Activated CD8-positive, alpha-beta memory T cell treated with anti-CD3 and anti-CD28 coated beads, Interleukin-2, amount 10 ng/mL, durations not matched to agents 7 days and 5 days (primary cell): ENCODE measurements at regions of chr1 and their contacts with region 1.

Region 1: DNA sequence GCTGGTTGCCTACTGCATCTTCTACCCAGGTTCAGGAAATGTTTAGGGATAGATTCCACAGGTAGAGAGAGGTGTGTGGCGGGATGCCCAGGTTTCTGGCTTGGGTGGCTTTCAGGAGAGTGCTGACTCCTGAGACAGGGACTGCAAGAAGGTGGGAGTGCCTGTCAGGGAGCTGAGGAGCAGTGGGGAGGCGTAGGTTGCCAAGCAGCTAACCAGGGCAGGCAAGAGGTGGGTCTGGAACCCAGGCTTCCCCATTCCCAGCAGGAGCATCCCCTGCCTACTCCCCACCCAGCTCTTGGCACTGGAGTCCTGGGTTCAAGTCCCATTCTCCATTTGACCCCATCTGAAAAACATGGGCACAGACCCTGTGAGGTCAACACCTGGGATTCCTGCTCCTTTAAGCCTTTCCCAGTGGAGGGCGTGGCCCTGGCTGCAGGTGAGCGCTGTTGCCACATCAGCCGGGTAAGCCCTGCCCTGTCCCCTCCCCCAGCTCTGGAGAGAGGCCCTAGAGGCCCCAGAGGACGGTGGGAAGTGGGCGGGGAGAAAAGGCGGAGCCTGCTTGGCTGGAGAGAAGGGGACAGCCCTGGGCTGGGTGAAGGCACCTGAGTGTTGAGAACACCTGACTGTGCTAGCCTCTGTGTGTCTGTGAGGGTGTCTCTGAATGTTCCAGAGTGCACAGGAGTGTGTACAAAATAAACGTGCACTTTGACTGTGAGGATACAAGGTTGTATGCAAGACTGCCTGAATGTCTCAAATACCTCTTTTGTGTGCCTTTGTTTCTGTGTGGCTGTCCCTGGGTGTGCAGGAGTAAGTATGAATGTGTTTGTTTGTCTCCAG is 14.0 kb upstream of the SYNC start:
- DNase-seq: peak; percentile 72
- ATAC-seq: peak; percentile 63
- H3K4me3 Mint-ChIP-seq: no peak overlapping the region
- H3K27ac Mint-ChIP-seq: no peak overlapping the region
- H3K4me1 Mint-ChIP-seq: peaks cover 8% of the 10 kb centered on the region
- H3K27me3 Mint-ChIP-seq: peaks cover 5% of the 10 kb centered on the region

Region 2: DNA sequence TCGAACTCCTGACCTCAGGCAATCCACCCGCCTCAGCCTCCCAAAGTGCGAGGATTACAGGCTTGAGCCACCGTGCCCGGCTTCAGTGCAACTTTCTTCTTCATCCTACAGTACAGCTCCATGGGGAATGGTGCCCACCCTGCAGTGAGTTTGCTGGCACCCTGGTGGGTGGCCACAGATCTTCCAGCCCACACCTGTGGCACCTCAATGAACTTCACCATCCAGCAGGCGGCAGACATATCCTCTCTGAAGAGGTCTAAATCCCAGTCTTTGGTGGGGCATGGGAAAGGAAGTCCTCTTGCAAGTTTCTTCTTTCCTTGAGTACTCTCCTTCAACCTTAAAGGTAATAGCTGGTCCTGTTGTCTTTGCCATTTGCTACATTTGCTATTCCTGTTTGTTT is 195.4 kb before region 1 on chr1:
- CTCF ChIA-PET with region 1: interaction called, 10 read pairs
- DNase-seq: no peak
- ATAC-seq: no peak
- H3K4me3 Mint-ChIP-seq: peak overlapping the region; percentile 71
- H3K27ac Mint-ChIP-seq: no peak overlapping the region
- H3K4me1 Mint-ChIP-seq: peaks cover 6% of the 10 kb centered on the region
- H3K27me3 Mint-ChIP-seq: peaks cover 7% of the 10 kb centered on the region

Region 3: GRCh38 chr1:32627596-32628162 is 88.9 kb before region 1 on chr1:
- CTCF ChIA-PET with region 1: no interaction called
- DNase-seq: peak; percentile 64
- ATAC-seq: peak; percentile 91
- H3K4me3 Mint-ChIP-seq: peak overlapping the region; percentile 48
- H3K27ac Mint-ChIP-seq: peak overlapping the region; percentile 92
- H3K4me1 Mint-ChIP-seq: peaks cover 45% of the 10 kb centered on the region
- H3K27me3 Mint-ChIP-seq: no peaks in the 10 kb centered on the region

Region 4: DNA sequence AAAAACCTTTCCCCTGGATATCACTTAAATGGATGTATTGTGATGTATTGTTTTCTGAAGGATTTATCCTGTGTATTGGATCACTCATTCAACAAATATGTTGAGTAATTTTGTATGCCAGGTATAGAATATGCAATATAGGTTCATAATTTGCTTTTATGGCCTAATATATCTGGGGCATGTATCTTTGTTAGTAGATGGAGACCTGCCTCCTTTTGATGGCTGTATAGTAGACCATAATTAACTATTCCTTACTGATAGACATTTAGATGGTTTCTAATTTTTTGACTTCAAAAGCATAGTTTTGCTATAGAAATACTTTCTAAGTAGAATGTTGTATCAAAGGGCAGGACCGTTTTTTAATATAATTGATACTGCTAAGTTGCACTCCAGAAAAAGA is 56.9 kb before region 1 on chr1:
- CTCF ChIA-PET with region 1: no interaction called
- DNase-seq: no peak
- ATAC-seq: no peak
- H3K4me3 Mint-ChIP-seq: no peak overlapping the region
- H3K27ac Mint-ChIP-seq: no peak overlapping the region
- H3K4me1 Mint-ChIP-seq: peaks cover 36% of the 10 kb centered on the region
- H3K27me3 Mint-ChIP-seq: no peaks in the 10 kb centered on the region

Region 5: DNA sequence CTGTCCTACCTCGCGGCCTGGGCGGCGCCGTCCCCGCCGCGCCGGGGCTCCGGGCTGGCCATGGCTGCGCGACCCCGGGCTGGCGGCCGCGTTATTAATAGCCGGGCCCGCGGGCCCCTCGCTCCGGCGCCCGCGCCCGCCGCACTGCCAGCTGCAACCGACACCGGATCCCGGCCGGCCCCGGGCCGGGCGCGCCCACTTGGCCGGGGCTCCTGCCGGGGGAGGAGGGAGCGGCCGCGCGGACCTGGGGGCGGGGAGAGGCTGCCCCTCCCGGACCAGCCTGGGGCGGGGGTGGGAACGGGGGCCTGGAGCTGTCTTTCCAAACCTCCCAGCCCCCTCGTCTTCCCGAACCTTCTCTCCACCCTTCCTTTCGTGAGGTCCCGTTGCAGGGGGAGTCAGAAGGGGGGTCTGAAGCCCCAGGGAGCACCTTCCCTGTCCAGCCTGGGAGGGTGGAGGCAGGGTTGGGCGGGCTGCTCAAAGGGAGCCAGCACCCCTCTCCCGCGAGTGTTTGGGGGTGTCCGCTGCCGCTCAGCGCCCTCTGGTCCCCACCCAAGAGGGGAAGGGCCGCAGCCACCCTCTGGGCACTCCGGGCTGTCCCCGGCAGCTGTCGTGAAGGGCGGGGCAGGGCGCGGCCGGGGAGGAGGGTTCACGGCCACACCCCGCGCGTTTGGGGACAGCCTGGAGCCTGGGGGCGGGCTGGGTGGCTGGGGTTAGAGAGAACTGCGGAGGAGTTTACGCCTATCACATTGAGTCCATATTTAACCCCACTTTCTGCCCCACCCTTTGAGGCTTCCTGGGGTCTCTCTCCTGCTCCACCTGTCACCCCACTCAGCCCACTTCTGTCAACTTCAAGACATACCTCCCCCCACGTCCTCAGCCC is 13.7 kb before region 1 on chr1 and contains the start of gene SYNC:
- CTCF ChIA-PET with region 1: interaction called, 21 read pairs
- DNase-seq: peak; percentile 43
- ATAC-seq: peak; percentile 79
- H3K4me3 Mint-ChIP-seq: peak within 1 kb of the TSS; percentile 21
- H3K27ac Mint-ChIP-seq: no peak within 1 kb of the TSS
- H3K4me1 Mint-ChIP-seq: peaks cover 12% of the 10 kb centered on the region
- H3K27me3 Mint-ChIP-seq: peaks cover 54% of the 10 kb centered on the region
- total RNA-seq, gene SYNC: not detected

Region 6: GRCh38 chr1:32743380-32744062 is 27.0 kb after region 1 on chr1:
- CTCF ChIA-PET with region 1: interaction called, 15 read pairs
- DNase-seq: no peak
- ATAC-seq: no peak
- H3K4me3 Mint-ChIP-seq: no peak overlapping the region
- H3K27ac Mint-ChIP-seq: no peak overlapping the region
- H3K4me1 Mint-ChIP-seq: peaks cover 2% of the 10 kb centered on the region
- H3K27me3 Mint-ChIP-seq: peaks cover 42% of the 10 kb centered on the region

Region 7: DNA sequence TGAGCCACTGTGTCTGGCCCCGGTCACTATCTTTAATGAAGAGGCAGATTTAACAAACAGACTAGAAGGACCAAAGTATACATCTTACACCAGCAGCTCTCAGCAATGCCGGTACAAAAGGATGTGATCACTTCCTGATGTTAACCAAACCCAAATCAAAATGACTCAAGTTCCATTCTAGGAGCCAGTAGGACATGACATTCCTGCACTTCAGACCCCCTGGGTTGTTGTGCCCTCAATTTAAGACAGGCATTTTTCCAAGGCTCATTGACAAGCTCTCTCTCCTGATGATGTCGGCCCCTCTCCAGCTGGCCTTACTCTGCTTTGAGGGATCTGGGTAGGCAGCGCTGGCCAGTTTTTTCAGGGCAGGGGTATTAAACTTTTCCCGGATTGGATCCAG is 65.6 kb after region 1 on chr1:
- CTCF ChIA-PET with region 1: interaction called, 153 read pairs
- DNase-seq: no peak
- ATAC-seq: no peak
- H3K4me3 Mint-ChIP-seq: no peak overlapping the region
- H3K27ac Mint-ChIP-seq: peak overlapping the region; percentile 49
- H3K4me1 Mint-ChIP-seq: peaks cover 16% of the 10 kb centered on the region
- H3K27me3 Mint-ChIP-seq: no peaks in the 10 kb centered on the region

Region 8: GRCh38 chr1:32876341-32877210 is 160.0 kb after region 1 on chr1:
- CTCF ChIA-PET with region 1: interaction called, 101 read pairs
- DNase-seq: peak; percentile 70
- ATAC-seq: peak; percentile 80
- H3K4me3 Mint-ChIP-seq: no peak overlapping the region
- H3K27ac Mint-ChIP-seq: no peak overlapping the region
- H3K4me1 Mint-ChIP-seq: peaks cover 2% of the 10 kb centered on the region
- H3K27me3 Mint-ChIP-seq: peaks cover 50% of the 10 kb centered on the region

Region 9: GRCh38 chr1:33119532-33120217 is 403.1 kb after region 1 on chr1:
- CTCF ChIA-PET with region 1: no interaction called
- DNase-seq: peak; percentile 23
- ATAC-seq: no peak
- H3K4me3 Mint-ChIP-seq: no peak overlapping the region
- H3K27ac Mint-ChIP-seq: no peak overlapping the region
- H3K4me1 Mint-ChIP-seq: no peaks in the 10 kb centered on the region
- H3K27me3 Mint-ChIP-seq: no peaks in the 10 kb centered on the region